H1 (cell line): ENCODE measurements at regions of chr5 and their contacts with region 1.

Region 1: GRCh38 chr5:180090098-180090768 is 18.7 kb upstream of the RNF130 start:
- DNase-seq: peak; percentile 80 to 95
- H3K4me3 ChIP-seq: peak overlapping the region; percentile 13 to 62 (median 24); a peak in 7 of 8 replicates
- H3K27ac ChIP-seq: peak overlapping the region; percentile 84
- H3K4me1 ChIP-seq: peaks cover 1 to 14% (median 9%) of the 10 kb centered on the region in 4 experiments
- H3K27me3 ChIP-seq: no peaks in the 10 kb centered on the region
- CTCF ChIP-seq: peak; percentile 69 to 87 (median 80)
- EP300 ChIP-seq: peak in 1 of 2 experiments; percentile 57; a peak in 1 of 3 replicates
- POLR2A ChIP-seq: peak in 1 of 2 experiments; percentile 52; a peak in 2 of 3 replicates
- RAD21 ChIP-seq: peak; percentile 72 to 76

Region 2: DNA sequence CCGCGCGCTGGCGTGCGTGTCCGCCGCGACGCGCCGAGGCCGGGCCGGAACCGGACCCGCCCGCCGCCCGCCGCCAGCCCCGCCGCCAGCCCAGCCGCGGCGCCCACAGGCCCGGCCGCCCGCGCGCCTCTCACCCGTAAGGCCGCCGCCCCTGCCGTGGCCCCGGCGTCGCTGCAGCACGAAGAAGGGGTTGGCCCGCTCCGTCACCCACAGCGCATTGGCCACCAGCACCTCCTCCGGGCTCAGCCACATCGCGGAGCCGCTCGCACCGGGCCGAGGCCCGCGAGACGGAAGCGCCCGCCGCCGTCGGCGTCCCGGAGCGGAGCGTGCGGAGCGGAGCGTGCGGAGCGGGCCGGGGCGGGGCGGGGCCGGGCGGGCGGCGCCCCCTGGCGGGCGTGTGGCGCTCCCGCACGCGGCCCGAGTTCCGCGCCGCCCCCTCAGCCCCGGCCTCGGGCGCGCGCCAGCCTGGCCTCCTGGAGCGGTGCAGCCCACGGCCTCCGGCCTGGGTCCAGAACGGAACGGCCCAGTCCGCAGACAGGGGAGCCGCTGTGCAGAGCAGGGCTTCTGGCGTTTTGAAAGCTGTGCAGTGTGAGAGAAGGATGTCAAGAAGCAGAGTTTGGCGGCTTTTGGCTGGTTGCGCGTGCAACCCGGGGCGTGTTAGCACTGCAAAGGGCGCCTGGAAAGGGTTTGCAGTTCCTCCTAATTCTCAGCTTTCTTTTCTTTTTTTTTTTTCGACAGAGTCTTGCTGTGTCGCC is 182.5 kb before region 1 on chr5 and contains the start of gene TBC1D9B:
- CTCF ChIA-PET with region 1: interaction called, 15 read pairs
- POLR2A ChIA-PET with region 1: interaction called, 4 read pairs
- DNase-seq: peak in 1 of 2 experiments; percentile 81
- H3K4me3 ChIP-seq: peak within 1 kb of the TSS; percentile 32 to 72 (median 54)
- H3K27ac ChIP-seq: no peak within 1 kb of the TSS
- H3K4me1 ChIP-seq: peaks cover 0 to 7% (median 4%) of the 10 kb centered on the region in 4 experiments; a peak in 5 of 7 replicates
- H3K27me3 ChIP-seq: peaks cover 0 to 6% (median 0%) of the 10 kb centered on the region in 4 experiments; a peak in 2 of 7 replicates
- CTCF ChIP-seq: peak in 2 of 3 experiments; percentile 24 to 28; a peak in 2 of 4 replicates
- EP300 ChIP-seq: no peak
- POLR2A ChIP-seq: peak in 1 of 2 experiments; percentile 43; a peak in 1 of 3 replicates
- RAD21 ChIP-seq: peak in 1 of 2 experiments; percentile 0; a peak in 2 of 4 replicates
- total RNA-seq, gene TBC1D9B: 49.9 and 57.1 TPM in 2 replicates

Region 3: GRCh38 chr5:179991106-179991505 is 99.1 kb before region 1 on chr5:
- CTCF ChIA-PET with region 1: interaction called, 10 read pairs
- POLR2A ChIA-PET with region 1: no interaction called
- DNase-seq: no peak
- H3K4me3 ChIP-seq: no peak overlapping the region
- H3K27ac ChIP-seq: no peak overlapping the region
- H3K4me1 ChIP-seq: no peaks in the 10 kb centered on the region
- H3K27me3 ChIP-seq: no peaks in the 10 kb centered on the region
- CTCF ChIP-seq: no peak
- EP300 ChIP-seq: no peak
- POLR2A ChIP-seq: no peak
- RAD21 ChIP-seq: no peak

Region 4: GRCh38 chr5:180071531-180072255 is 18.5 kb before region 1 on chr5 and contains the start of gene RNF130:
- CTCF ChIA-PET with region 1: interaction called, 15 read pairs
- POLR2A ChIA-PET with region 1: interaction called, 40 read pairs
- DNase-seq: peak in 1 of 2 experiments; percentile 96
- H3K4me3 ChIP-seq: peak within 1 kb of the TSS; percentile 78 to 94 (median 93)
- H3K27ac ChIP-seq: peak within 1 kb of the TSS; percentile 82
- H3K4me1 ChIP-seq: peaks cover 2 to 11% (median 8%) of the 10 kb centered on the region in 4 experiments; a peak in 4 of 7 replicates
- H3K27me3 ChIP-seq: peaks cover 6 to 18% (median 16%) of the 10 kb centered on the region in 4 experiments
- CTCF ChIP-seq: no peak
- EP300 ChIP-seq: no peak
- POLR2A ChIP-seq: peak in 1 of 2 experiments; percentile 67; a peak in 2 of 3 replicates
- RAD21 ChIP-seq: no peak; a peak in 1 of 4 replicates
- total RNA-seq, gene RNF130: 63.1 and 65.1 TPM in 2 replicates

Region 5: GRCh38 chr5:180077594-180078284 is 12.5 kb before region 1 on chr5:
- CTCF ChIA-PET with region 1: interaction called, 15 read pairs
- POLR2A ChIA-PET with region 1: interaction called, 40 read pairs
- DNase-seq: no peak
- H3K4me3 ChIP-seq: no peak overlapping the region
- H3K27ac ChIP-seq: no peak overlapping the region
- H3K4me1 ChIP-seq: peaks cover 1 to 10% (median 4%) of the 10 kb centered on the region in 4 experiments; a peak in 6 of 7 replicates
- H3K27me3 ChIP-seq: peaks cover 2 to 14% (median 11%) of the 10 kb centered on the region in 4 experiments; a peak in 6 of 7 replicates
- CTCF ChIP-seq: no peak
- EP300 ChIP-seq: no peak
- POLR2A ChIP-seq: no peak
- RAD21 ChIP-seq: no peak